ENCODE measurements at regions of chr19 and their contacts with region 1.

Region 1: GRCh38 chr19:4638828-4639530 is at the start of gene TNFAIP8L1:
- DNase-seq: peak; percentile 90
- H3K4me3 ChIP-seq: peak within 1 kb of the TSS; percentile 73 to 80 (median 77)
- H3K27ac ChIP-seq: peak within 1 kb of the TSS; percentile 15
- H3K4me1 ChIP-seq: peaks cover 40% of the 10 kb centered on the region
- H3K27me3 ChIP-seq: no peaks in the 10 kb centered on the region
- CTCF ChIP-seq: no peak
- total RNA-seq, gene TNFAIP8L1: 2.3 to 7.3 TPM

Region 2: DNA sequence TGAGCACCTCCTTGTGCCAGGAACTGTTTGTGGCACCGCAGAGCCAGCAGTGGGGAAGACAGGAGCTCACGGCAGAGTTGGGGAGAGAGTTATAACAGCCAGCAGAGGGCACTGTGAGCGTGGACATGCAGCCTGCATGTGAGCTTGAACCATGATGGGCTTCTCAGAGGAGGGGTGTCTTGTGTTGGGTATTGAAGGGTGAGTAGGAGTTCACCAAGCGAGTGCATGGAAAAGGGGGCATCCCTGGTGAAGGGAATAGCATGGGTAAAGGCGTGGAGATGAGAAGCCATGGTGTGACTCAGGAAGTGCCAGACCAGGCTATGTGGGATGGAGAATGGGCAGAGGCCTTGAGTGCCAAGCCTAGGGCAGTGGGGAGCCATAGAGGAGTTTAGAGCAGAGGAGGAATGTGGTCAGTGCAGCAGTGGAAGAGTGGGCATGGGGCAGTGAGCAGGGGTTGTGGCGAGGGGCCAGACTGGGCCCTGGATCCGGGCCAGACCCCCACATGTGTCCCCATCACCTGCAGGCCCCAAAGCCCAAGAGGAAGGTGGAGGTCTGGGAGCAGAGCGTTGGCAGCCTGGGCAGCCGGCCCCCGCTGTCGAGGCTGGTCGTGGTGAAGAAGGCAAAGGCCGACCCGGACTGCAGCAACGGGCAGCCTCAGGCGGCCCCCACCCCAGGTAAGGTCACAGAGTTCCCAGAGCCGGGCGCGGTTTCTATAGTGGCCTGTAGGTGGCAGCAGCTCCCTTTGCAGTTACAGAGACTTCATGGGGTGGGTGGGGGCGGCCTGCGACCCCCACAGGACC is 371.7 kb before region 1 on chr19:
- CTCF ChIA-PET with region 1: no interaction called
- dilution Hi-C with region 1: no loop called
- in situ Hi-C with region 1: no loop called
- intact Hi-C with region 1: loop called (anchors 1 kb)
- DNase-seq: peak; percentile 42
- H3K4me3 ChIP-seq: no peak overlapping the region
- H3K27ac ChIP-seq: no peak overlapping the region
- H3K4me1 ChIP-seq: no peaks in the 10 kb centered on the region
- H3K27me3 ChIP-seq: no peaks in the 10 kb centered on the region
- CTCF ChIP-seq: peak; percentile 66 to 80

Region 3: GRCh38 chr19:4557971-4558941 is 80.7 kb before region 1 on chr19:
- CTCF ChIA-PET with region 1: no interaction called
- dilution Hi-C with region 1: no loop called
- in situ Hi-C with region 1: no loop called
- intact Hi-C with region 1: loop called (anchors 1 kb)
- DNase-seq: no peak
- H3K4me3 ChIP-seq: no peak overlapping the region
- H3K27ac ChIP-seq: no peak overlapping the region
- H3K4me1 ChIP-seq: no peaks in the 10 kb centered on the region
- H3K27me3 ChIP-seq: no peaks in the 10 kb centered on the region
- CTCF ChIP-seq: peak; percentile 89 to 97

Region 4: DNA sequence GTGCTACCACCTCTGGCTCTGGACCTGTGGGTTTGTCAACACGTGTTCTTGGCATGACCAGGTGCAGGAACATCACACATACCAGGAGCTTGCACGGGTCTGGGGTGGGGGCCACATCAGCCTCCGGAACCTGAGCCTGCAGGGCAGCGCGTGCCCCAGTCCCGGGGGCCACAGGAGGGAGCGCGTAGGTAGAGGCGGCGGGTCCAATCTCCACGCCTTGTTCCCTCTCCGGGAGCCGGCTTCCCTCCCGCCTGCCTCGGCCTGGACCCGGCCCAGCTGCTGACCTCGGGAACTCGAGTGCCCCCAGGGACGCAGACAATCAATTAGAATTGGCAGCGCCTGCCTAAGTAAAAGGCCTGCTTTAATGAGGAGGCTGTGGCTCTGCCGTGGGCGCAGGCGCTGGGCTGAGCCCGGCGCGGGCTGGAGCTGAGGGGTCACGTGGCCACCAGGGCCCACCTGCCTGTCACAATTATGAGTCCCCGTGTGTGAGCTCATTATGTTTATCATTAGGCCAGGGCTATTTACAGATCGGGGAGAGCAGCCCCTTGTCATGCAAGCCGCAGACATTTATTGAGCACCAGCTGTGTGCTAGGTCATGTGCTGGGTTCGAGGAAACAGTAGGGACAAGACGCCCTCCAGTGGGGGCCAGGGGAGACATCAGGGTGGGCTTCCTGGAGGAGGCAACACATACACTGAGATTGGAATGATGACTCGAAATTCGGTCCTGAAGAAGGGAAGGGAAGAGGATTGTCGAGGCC is 31.9 kb before region 1 on chr19:
- CTCF ChIA-PET with region 1: no interaction called
- dilution Hi-C with region 1: no loop called
- in situ Hi-C with region 1: no loop called
- intact Hi-C with region 1: no loop called
- DNase-seq: no peak
- H3K4me3 ChIP-seq: no peak overlapping the region
- H3K27ac ChIP-seq: no peak overlapping the region
- H3K4me1 ChIP-seq: peaks cover 4% of the 10 kb centered on the region
- H3K27me3 ChIP-seq: peaks cover 2% of the 10 kb centered on the region
- CTCF ChIP-seq: no peak

Region 5: GRCh38 chr19:4620675-4621074 is 18.3 kb before region 1 on chr19:
- CTCF ChIA-PET with region 1: interaction called, 16 read pairs
- dilution Hi-C with region 1: no loop called
- in situ Hi-C with region 1: no loop called
- intact Hi-C with region 1: no loop called
- DNase-seq: no peak
- H3K4me3 ChIP-seq: no peak overlapping the region
- H3K27ac ChIP-seq: no peak overlapping the region
- H3K4me1 ChIP-seq: no peaks in the 10 kb centered on the region
- H3K27me3 ChIP-seq: no peaks in the 10 kb centered on the region
- CTCF ChIP-seq: no peak

Region 6: GRCh38 chr19:4690351-4690750 is 51.4 kb after region 1 on chr19:
- CTCF ChIA-PET with region 1: no interaction called
- dilution Hi-C with region 1: no loop called
- in situ Hi-C with region 1: no loop called
- intact Hi-C with region 1: no loop called
- DNase-seq: no peak
- H3K4me3 ChIP-seq: no peak overlapping the region
- H3K27ac ChIP-seq: no peak overlapping the region
- H3K4me1 ChIP-seq: peaks cover 17% of the 10 kb centered on the region
- H3K27me3 ChIP-seq: no peaks in the 10 kb centered on the region
- CTCF ChIP-seq: peak; percentile 3 to 10

Region 7: GRCh38 chr19:4723367-4724187 is 84.6 kb after region 1 on chr19 and contains the start of gene DPP9:
- CTCF ChIA-PET with region 1: no interaction called
- dilution Hi-C with region 1: no loop called
- in situ Hi-C with region 1: no loop called
- intact Hi-C with region 1: no loop called
- DNase-seq: peak; percentile 98
- H3K4me3 ChIP-seq: peak within 1 kb of the TSS; percentile 73 to 96 (median 90)
- H3K27ac ChIP-seq: peak within 1 kb of the TSS; percentile 35
- H3K4me1 ChIP-seq: peaks cover 25% of the 10 kb centered on the region
- H3K27me3 ChIP-seq: no peaks in the 10 kb centered on the region
- CTCF ChIP-seq: peak in 1 of 2 donors; percentile 52
- total RNA-seq, gene DPP9: 156 to 242 TPM

Region 8: DNA sequence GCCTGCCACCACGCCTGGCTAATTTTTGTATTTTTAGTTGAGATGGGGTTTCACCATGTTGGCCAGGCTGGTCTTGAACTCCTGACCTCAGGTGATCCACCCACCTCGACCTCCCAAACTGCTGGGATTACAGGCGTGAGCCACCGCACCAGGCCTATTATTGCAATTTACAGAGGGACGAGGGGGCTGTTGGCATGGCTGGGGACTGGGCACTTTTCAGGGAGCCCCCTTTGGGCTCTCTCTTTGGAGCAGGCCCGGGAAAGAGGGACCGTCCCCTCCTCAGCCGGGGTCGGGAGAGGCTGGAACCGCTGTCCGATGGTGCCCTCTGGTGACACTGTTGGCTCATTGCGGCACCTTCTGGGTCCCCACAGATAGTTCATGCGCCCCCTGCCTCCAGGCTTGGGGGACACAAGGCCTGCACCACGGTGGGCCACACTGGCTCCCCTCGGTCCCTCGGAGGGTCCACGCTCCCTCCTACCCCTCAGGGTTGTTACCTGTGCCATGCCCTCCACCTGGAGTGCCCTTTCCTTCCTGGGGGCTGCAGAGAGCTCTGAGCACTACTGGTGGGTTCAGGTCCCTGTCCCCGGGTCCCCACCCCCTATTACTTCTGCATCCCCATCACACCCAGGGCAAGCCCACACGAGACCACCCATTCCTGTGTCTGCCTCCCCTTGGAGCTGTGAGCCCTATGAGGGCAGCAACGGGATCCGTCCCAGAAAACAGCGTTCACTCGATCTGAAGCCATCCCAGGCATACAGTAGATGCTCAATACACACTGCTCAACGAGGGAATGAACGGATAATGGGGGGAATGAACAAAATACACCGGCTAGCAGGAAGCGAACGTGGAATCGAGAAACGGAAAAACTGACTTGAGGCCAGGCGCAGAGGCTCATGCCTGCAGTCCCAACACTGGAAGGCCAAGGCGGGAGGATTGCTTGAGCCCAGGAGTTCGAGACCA is 165.0 kb after region 1 on chr19:
- CTCF ChIA-PET with region 1: no interaction called
- dilution Hi-C with region 1: loop called (anchors 10 kb)
- in situ Hi-C with region 1: no loop called
- intact Hi-C with region 1: no loop called
- DNase-seq: no peak
- H3K4me3 ChIP-seq: no peak overlapping the region
- H3K27ac ChIP-seq: no peak overlapping the region
- H3K4me1 ChIP-seq: peaks cover 10% of the 10 kb centered on the region
- H3K27me3 ChIP-seq: no peaks in the 10 kb centered on the region
- CTCF ChIP-seq: peak; percentile 63 to 84

Measured in mammary epithelial cell (primary cell).